PC-9 (cell line): ENCODE measurements at regions of chr2 and their contacts with region 1.

Region 1: DNA sequence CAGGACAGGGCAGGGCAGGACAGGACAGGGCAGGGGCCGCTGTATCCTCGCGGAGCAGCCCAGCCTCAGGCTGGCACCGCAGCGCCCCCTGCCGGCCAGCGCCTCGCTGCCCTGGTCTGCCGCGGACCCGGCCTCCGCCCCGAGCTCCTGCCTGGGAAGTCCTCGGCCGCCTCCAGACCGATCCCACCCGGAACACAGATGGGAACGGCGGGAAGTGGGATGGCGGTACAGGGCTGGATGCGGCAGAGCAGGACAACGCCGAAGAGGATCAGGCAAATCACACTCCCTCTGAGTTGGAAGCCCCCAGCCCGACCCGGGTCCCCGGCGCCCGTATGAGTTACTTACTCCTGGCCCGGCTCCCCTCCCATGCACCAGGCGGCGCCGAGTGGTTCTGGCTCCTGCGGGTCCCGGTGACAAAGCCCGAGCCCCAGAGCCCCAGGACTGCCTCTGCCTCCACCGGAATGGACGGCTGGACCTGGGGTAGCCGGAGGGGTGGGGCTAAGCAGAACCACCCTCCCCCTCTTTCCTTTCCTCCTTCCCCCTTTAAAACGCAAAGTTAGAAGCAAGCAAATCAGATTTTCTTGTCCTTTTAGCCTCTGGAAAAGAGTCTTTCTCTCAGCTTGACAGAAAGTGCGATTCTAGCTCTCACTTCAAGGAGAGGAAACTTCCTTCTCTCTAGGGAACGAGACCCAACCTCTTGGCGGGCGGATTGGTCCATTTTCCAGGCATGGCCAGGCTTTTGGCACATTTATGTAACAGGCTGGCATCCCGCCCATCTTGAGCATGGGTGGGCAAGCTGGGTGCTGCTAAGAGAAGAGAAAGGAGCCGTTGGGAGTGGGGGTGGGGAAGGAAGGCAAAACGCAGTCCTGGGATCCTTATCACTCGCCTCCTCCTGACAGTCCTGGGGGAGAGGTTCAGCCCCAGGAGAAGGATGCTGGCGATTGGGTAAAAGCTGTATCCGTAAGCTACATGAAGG is at the start of gene TP53I3:
- DNase-seq: peak; percentile 75 to 91
- H3K4me3 ChIP-seq: peak within 1 kb of the TSS; percentile 71
- H3K27ac ChIP-seq: peak within 1 kb of the TSS; percentile 61
- H3K4me1 ChIP-seq: peaks cover 18% of the 10 kb centered on the region
- H3K27me3 ChIP-seq: no peaks in the 10 kb centered on the region
- CTCF ChIP-seq: peak; percentile 96
- total RNA-seq, gene TP53I3: 21.4 and 22.9 TPM in 2 replicates

Region 2: GRCh38 chr2:23926750-23927571 is 157.7 kb before region 1 on chr2 and contains the start of gene ATAD2B:
- CTCF ChIA-PET with region 1: interaction called, 14 read pairs
- POLR2A ChIA-PET with region 1: interaction called, 3 read pairs
- intact Hi-C with region 1: loop called (anchors 1 kb)
- DNase-seq: peak; percentile 86 to 96
- H3K4me3 ChIP-seq: peak within 1 kb of the TSS; percentile 99
- H3K27ac ChIP-seq: peak within 1 kb of the TSS; percentile 76
- H3K4me1 ChIP-seq: peaks cover 30% of the 10 kb centered on the region
- H3K27me3 ChIP-seq: no peaks in the 10 kb centered on the region
- CTCF ChIP-seq: peak; percentile 79
- total RNA-seq, gene ATAD2B: 12.6 and 12.8 TPM in 2 replicates

Region 3: DNA sequence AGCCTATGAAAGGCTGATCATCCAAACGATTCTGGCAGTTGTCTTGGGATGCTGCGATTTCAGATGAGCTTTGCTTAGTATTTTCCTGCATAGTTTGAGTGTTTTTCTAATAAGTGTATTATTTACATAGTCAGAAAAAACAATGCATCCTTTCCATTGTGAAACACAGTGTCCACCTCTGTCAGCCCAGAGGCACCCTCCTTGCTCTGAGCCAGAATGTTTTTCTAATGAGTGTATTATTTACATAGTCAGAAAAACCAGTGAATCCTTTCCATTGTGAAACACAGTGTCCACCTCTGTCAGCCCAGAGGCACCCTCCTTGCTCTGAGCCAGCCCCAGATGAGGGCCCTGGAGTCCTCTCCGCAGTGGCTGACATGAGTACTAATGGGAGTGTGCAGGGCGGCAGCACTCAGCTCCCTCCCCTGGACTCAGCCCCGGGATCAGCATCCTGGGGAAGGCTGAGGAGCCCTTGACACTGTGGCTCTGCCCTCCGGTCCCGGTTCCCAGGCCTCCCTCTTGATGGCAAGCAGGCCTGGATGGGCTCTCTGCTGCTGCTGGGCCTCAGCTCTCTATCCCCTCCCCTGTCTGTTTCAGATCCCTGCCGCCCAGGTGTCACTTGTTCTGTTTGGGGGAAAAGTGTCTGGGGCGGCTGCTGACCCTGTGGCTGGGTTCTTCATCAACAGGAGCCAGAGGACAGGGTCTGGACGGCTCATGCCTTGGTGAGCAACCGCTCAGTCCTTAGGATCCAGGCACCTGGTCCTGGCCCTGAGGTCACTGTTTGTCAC is 68.9 kb before region 1 on chr2:
- CTCF ChIA-PET with region 1: no interaction called
- POLR2A ChIA-PET with region 1: interaction called, 9 read pairs
- intact Hi-C with region 1: loop called (anchors 2 kb)
- DNase-seq: peak; percentile 84 to 99
- H3K4me3 ChIP-seq: no peak overlapping the region
- H3K27ac ChIP-seq: peak overlapping the region; percentile 55
- H3K4me1 ChIP-seq: peaks cover 45% of the 10 kb centered on the region
- H3K27me3 ChIP-seq: no peaks in the 10 kb centered on the region
- CTCF ChIP-seq: no peak

Region 4: GRCh38 chr2:24164125-24164973 is 79.7 kb after region 1 on chr2:
- CTCF ChIA-PET with region 1: no interaction called
- POLR2A ChIA-PET with region 1: no interaction called
- intact Hi-C with region 1: loop called (anchors 1 kb)
- DNase-seq: peak in 1 of 2 experiments; percentile 31
- H3K4me3 ChIP-seq: no peak overlapping the region
- H3K27ac ChIP-seq: no peak overlapping the region
- H3K4me1 ChIP-seq: no peaks in the 10 kb centered on the region
- H3K27me3 ChIP-seq: no peaks in the 10 kb centered on the region
- CTCF ChIP-seq: peak; percentile 73

Region 5: DNA sequence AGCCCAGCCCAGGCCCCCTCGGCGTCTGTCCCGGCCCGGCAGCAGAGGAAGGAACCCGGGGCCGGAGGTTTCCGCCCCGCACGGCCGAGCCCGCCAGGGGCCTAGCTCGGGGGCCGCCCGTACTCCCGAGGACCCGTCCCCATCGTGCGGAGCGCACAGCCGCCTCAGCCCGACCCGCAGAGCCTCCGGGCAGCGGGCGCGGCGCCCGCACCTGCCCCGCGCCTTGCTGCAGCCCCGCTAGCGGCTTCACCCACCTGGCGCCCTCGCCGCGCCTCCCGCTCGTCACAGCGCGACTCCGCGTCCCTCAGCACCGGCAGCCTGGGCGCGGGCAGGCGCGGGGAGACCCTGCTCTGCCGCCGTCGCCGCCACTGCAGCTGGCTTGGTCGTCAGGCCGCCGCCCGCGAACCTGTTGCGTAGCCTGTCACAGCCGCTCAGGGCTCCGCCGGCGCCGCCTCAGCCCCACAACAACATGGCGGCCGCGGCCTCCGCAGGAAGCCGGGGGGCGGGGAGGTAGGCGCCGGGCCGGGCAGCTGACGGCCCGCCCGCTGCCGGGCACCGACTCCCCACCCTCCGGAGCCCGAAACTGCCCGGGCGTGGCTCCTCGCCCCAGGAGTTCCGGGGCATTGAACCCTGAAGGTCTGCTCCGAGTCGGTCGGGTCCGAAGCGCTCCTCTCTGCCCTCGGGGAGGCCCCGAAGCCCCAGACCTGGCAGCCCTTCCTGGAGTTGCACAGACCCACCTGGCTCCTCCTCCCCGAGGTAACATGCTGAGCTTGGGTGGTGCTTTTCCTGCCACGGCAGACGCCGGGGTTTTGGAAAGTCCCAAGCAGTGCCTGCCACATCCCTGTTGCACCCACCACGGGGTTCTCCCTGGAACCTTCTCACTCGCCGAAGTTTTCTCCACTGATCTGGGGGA is 275.6 kb after region 1 on chr2 and contains the start of gene ITSN2:
- CTCF ChIA-PET with region 1: no interaction called
- POLR2A ChIA-PET with region 1: no interaction called
- intact Hi-C with region 1: loop called (anchors 1 kb)
- DNase-seq: peak; percentile 64 to 77
- H3K4me3 ChIP-seq: peak within 1 kb of the TSS; percentile 97
- H3K27ac ChIP-seq: peak within 1 kb of the TSS; percentile 54
- H3K4me1 ChIP-seq: peaks cover 30% of the 10 kb centered on the region
- H3K27me3 ChIP-seq: no peaks in the 10 kb centered on the region
- CTCF ChIP-seq: no peak
- total RNA-seq, gene ITSN2: 28.4 and 30.4 TPM in 2 replicates

Region 6: DNA sequence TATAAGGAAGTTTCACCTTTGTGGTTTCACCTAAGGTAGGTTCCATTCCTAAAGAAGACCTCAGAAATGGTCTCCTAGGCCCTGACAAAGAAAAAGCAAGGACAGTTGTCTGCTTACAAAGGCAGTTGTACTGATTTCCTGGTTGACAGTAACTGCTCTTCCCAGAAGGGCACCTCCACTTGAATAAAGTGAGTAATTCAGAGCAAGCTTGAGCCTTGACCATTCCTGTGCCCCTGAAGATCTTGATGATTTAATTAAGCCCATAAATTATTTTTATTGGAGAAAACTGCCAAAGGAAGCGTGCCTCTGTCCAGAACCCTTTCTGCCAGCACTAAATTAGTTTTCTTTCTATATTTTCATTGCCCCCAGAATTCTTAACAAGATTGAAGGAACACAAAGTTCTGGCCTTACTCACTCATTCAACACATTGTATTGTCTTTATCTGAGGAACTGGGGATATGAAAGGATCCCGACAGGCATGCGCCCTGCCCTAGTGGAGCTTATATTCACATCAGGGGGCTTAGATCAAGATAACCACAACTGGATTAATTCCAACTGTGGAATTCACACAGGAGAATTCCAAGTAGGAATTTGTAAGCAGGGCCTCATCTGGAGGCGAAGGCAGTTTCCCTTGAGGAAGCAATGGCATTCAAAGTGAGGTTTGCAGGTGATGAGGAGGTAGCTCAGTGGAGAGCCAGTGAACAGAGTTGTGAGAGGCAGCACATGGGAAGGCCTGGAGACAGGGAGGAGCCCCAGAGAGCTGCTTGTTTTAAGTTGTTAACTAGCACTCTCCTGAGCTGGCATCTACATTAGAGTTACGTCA is 687.3 kb after region 1 on chr2:
- CTCF ChIA-PET with region 1: interaction called, 10 read pairs
- POLR2A ChIA-PET with region 1: no interaction called
- intact Hi-C with region 1: no loop called
- DNase-seq: no peak
- H3K4me3 ChIP-seq: no peak overlapping the region
- H3K27ac ChIP-seq: no peak overlapping the region
- H3K4me1 ChIP-seq: no peaks in the 10 kb centered on the region
- H3K27me3 ChIP-seq: no peaks in the 10 kb centered on the region
- CTCF ChIP-seq: no peak